ENCODE measurements at regions of chr1 and their contacts with region 1.

Region 1: GRCh38 chr1:164602480-164603093 is 43.6 kb downstream of the PBX1 start:
- DNase-seq: peak; percentile 52
- ATAC-seq: peak; percentile 75
- H3K4me3 ChIP-seq: no peak overlapping the region
- H3K27ac ChIP-seq: peak overlapping the region; percentile 44
- H3K4me1 ChIP-seq: peaks cover 12% of the 10 kb centered on the region
- H3K27me3 ChIP-seq: no peaks in the 10 kb centered on the region
- CTCF ChIP-seq: no peak
- POLR2A ChIP-seq: no peak
- RAD21 ChIP-seq: no peak

Region 2: GRCh38 chr1:164588516-164589341 is 13.9 kb before region 1 on chr1:
- CTCF ChIA-PET with region 1: interaction called, 3 read pairs
- POLR2A ChIA-PET with region 1: no interaction called
- dilution Hi-C with region 1: no loop called
- in situ Hi-C with region 1: no loop called
- intact Hi-C with region 1: loop called (anchors 2 kb)
- DNase-seq: peak; percentile 77
- ATAC-seq: peak; percentile 87
- H3K4me3 ChIP-seq: peak overlapping the region; percentile 21
- H3K27ac ChIP-seq: peak overlapping the region; percentile 98
- H3K4me1 ChIP-seq: peaks cover 24% of the 10 kb centered on the region
- H3K27me3 ChIP-seq: no peaks in the 10 kb centered on the region
- CTCF ChIP-seq: no peak
- POLR2A ChIP-seq: no peak
- RAD21 ChIP-seq: no peak

Region 3: DNA sequence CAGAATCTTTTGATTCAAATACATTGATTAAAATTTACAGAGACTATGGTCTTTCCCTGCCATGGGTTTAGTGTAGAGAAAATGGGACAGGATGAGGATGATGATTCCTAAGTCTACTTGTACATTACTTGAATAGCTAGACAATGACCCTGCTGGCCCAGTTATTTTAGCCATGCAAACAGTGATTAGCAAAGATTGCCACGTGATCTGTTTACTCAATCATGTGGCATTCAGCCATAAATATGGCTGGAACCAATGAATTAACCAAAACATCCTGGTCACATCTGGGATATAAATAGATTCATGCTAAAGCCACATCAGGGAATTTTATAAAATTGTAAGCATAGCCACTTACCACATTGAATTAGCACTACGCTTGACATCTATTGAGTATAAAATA is 123.6 kb after region 1 on chr1:
- CTCF ChIA-PET with region 1: no interaction called
- POLR2A ChIA-PET with region 1: interaction called, 13 read pairs
- dilution Hi-C with region 1: no loop called
- in situ Hi-C with region 1: no loop called
- intact Hi-C with region 1: no loop called
- DNase-seq: peak; percentile 96
- ATAC-seq: peak; percentile 80
- H3K4me3 ChIP-seq: no peak overlapping the region
- H3K27ac ChIP-seq: no peak overlapping the region
- H3K4me1 ChIP-seq: peaks cover 19% of the 10 kb centered on the region
- H3K27me3 ChIP-seq: no peaks in the 10 kb centered on the region
- CTCF ChIP-seq: no peak
- POLR2A ChIP-seq: no peak
- RAD21 ChIP-seq: no peak

Region 4: GRCh38 chr1:165228676-165229075 is 626.1 kb after region 1 on chr1:
- CTCF ChIA-PET with region 1: no interaction called
- POLR2A ChIA-PET with region 1: no interaction called
- dilution Hi-C with region 1: no loop called
- in situ Hi-C with region 1: no loop called
- intact Hi-C with region 1: no loop called
- DNase-seq: peak; percentile 0
- ATAC-seq: no peak
- H3K4me3 ChIP-seq: no peak overlapping the region
- H3K27ac ChIP-seq: no peak overlapping the region
- H3K4me1 ChIP-seq: no peaks in the 10 kb centered on the region
- H3K27me3 ChIP-seq: no peaks in the 10 kb centered on the region
- CTCF ChIP-seq: no peak
- POLR2A ChIP-seq: no peak
- RAD21 ChIP-seq: no peak